Common myeloid progenitor, CD34-positive (primary cell): ENCODE measurements at regions of chr5 and their contacts with region 1.

Region 1: GRCh38 chr5:138077065-138077696 is 6.7 kb upstream of the WNT8A start:
- DNase-seq: peak; percentile 51 to 72 (median 65)
- H3K4me3 ChIP-seq: no peak overlapping the region
- H3K27ac ChIP-seq: no peak overlapping the region
- H3K4me1 ChIP-seq: peaks cover 0 to 7% (median 2%) of the 10 kb centered on the region in 4 experiments
- H3K27me3 ChIP-seq: no peaks in the 10 kb centered on the region

Region 2: GRCh38 chr5:137695651-137696428 is 381.3 kb before region 1 on chr5:
- CTCF ChIA-PET with region 1: no interaction called
- POLR2A ChIA-PET with region 1: no interaction called
- DNase-seq: peak; percentile 54 to 92 (median 83)
- H3K4me3 ChIP-seq: peak overlapping the region in 3 of 7 experiments; percentile 15 to 29 (median 18)
- H3K27ac ChIP-seq: peak overlapping the region; percentile 18 to 65
- H3K4me1 ChIP-seq: peaks cover 18 to 68% (median 47%) of the 10 kb centered on the region in 4 experiments
- H3K27me3 ChIP-seq: no peaks in the 10 kb centered on the region

Region 3: GRCh38 chr5:138035605-138036537 is 41.3 kb before region 1 on chr5:
- CTCF ChIA-PET with region 1: interaction called, 21 read pairs
- POLR2A ChIA-PET with region 1: no interaction called
- DNase-seq: peak; percentile 92 to 95 (median 93)
- H3K4me3 ChIP-seq: no peak overlapping the region
- H3K27ac ChIP-seq: no peak overlapping the region
- H3K4me1 ChIP-seq: peaks cover 4 to 30% (median 17%) of the 10 kb centered on the region in 4 experiments
- H3K27me3 ChIP-seq: no peaks in the 10 kb centered on the region

Region 4: DNA sequence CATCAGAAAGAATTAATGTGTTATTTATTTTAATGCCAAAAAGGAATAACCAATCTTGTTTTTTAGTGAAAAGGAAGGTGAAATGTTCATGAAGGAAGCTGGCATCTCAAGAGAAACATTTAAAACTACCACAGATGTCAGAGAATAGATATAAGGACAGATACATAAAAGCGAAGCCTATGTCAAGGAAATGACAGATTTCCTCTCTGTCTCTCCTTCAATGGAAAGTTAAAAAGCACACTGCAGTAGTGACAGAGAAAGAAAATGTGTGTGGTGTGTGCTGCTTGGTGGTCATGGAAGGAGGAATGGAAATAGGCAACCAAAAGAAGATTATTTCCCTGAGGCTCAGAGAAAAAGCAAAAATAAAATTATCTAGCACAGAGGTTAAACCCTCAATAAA is 15.9 kb after region 1 on chr5:
- CTCF ChIA-PET with region 1: interaction called, 72 read pairs
- POLR2A ChIA-PET with region 1: interaction called, 3 read pairs
- DNase-seq: peak in 1 of 3 donors; percentile 23
- H3K4me3 ChIP-seq: no peak overlapping the region
- H3K27ac ChIP-seq: peak overlapping the region in 1 of 2 experiments; percentile 46
- H3K4me1 ChIP-seq: peaks cover 3 to 21% (median 19%) of the 10 kb centered on the region in 4 experiments
- H3K27me3 ChIP-seq: no peaks in the 10 kb centered on the region

Region 5: DNA sequence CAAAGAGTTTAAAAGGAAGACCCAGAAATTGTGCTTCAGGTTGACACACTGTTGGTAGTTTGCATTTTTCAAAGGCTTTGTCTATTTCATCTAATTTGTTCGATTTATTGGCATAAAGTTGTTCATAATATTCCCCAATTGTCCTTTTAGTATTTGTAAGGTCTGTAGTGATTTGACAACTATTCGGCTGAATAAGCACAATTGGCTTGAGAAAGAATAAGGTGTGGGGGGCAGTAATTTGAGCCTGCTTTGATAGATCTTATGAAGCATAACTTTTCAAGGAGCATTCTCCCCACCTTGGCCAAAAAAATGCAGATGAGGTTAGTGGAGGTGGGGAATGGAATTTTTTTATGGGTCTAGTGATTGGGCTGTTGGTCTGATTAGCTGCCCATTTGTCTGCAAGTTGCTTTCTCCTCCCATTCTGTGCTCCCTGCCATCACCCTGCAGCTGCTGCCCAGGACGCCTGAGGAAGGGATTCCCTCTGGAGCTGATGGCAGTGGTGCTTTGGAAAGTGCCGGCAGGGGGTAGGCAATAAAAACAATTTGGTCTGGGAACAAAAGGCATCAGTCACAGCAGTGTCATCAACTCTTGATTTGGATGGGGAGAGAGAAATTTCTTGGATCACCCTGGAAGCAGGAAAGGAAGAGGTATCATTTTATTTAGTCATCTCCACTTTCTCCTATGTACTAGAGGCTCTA is 33.2 kb after region 1 on chr5:
- CTCF ChIA-PET with region 1: interaction called, 13 read pairs
- POLR2A ChIA-PET with region 1: no interaction called
- DNase-seq: no peak
- H3K4me3 ChIP-seq: no peak overlapping the region
- H3K27ac ChIP-seq: no peak overlapping the region
- H3K4me1 ChIP-seq: no peaks in the 10 kb centered on the region
- H3K27me3 ChIP-seq: peaks cover 0 to 4% (median 0%) of the 10 kb centered on the region in 5 experiments

Region 6: DNA sequence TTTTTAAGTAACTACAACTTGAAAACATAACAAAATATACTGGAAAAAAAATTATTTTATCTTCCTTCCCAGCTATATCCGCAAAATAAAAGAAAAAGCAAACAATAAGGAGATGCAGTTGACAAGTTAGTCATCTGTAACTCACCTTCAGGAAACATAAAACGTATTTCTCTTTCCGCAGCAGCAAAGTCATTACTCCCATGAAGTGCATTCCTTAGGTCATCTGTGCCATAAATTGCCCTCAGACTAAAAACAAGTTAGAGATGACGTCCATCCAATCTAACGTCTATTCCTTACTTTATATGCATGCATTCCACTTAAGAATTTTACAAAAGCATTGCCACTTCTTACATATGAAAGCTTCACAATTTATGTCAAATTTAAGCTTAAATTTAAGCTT is 51.2 kb after region 1 on chr5:
- CTCF ChIA-PET with region 1: interaction called, 101 read pairs
- POLR2A ChIA-PET with region 1: no interaction called
- DNase-seq: peak; percentile 18 to 77 (median 52)
- H3K4me3 ChIP-seq: no peak overlapping the region
- H3K27ac ChIP-seq: peak overlapping the region in 1 of 2 experiments; percentile 71
- H3K4me1 ChIP-seq: peaks cover 0 to 3% (median 0%) of the 10 kb centered on the region in 4 experiments
- H3K27me3 ChIP-seq: no peaks in the 10 kb centered on the region

Region 7: DNA sequence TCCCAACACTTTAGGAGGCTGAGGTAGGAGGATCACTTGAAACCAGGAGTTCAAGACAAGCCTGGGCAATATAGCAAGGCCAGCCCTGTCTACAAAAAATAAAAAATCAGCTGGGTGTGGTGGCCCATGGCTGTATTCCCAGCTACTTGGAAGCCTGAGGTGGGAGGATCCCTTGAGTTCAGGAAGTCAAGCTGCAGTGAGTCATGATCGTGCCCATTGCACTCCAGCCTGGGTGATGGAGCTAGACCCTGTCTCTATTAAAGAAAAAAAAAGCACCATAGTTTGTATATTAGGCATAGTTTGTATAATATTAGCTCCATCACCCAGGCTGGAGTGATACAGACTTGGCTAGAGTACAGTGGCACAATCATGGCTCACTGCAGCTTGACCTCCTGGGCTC is 71.6 kb after region 1 on chr5:
- CTCF ChIA-PET with region 1: interaction called, 14 read pairs
- POLR2A ChIA-PET with region 1: interaction called, 3 read pairs
- DNase-seq: peak in 2 of 3 donors; percentile 9 to 19
- H3K4me3 ChIP-seq: no peak overlapping the region
- H3K27ac ChIP-seq: no peak overlapping the region
- H3K4me1 ChIP-seq: no peaks in the 10 kb centered on the region
- H3K27me3 ChIP-seq: no peaks in the 10 kb centered on the region

Region 8: DNA sequence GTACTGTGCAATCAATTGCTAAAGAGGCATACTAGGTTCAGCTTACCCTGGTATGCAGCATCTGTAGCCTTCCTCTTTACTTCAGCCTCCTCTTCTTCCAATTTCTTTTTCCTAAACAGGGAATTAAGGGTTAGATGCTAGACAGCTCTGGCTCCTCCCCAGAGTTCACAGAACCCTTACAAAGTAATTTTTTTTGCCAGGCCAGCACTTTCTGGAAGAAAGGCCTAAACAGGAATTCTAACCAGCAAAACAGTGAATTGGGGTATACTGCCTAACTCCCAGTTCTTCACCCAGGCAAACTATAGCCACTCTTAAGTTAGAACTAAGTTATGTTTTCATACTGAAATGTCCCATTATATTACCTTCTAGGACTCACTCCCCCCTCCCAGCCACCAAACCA is 93.1 kb after region 1 on chr5:
- CTCF ChIA-PET with region 1: no interaction called
- POLR2A ChIA-PET with region 1: no interaction called
- DNase-seq: no peak
- H3K4me3 ChIP-seq: no peak overlapping the region
- H3K27ac ChIP-seq: no peak overlapping the region
- H3K4me1 ChIP-seq: no peaks in the 10 kb centered on the region
- H3K27me3 ChIP-seq: no peaks in the 10 kb centered on the region

Region 9: DNA sequence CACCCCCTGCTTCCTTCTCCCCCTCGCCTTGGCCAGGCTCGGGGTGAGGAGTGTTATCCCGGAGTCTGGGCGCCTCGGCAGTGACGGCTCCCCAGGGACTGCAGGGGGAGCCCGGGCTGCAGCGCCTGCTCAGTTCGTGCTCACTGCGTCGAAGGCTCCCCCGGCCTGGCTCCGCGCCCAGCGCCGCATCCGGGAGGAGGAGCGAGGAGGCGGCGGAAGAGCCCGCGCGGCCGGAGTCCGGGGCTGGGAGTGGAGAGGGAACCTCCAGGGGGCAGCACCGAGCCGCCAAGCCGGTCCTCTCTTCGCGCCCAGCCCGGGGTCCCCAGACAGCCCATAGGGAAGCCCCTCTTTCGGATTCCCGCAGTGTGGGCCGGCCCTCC is 386.8 kb after region 1 on chr5:
- CTCF ChIA-PET with region 1: no interaction called
- POLR2A ChIA-PET with region 1: no interaction called
- DNase-seq: peak; percentile 95 to 97 (median 95)
- H3K4me3 ChIP-seq: peak overlapping the region; percentile 73 to 89 (median 80)
- H3K27ac ChIP-seq: peak overlapping the region; percentile 66 to 88
- H3K4me1 ChIP-seq: peaks cover 2 to 43% (median 36%) of the 10 kb centered on the region in 4 experiments
- H3K27me3 ChIP-seq: peaks cover 0 to 24% (median 8%) of the 10 kb centered on the region in 5 experiments